ENCODE measurements at regions of chr21 and their contacts with region 1.

Region 1: GRCh38 chr21:41816220-41817165 is 49.6 kb upstream of the RIPK4 start:
- DNase-seq: no peak
- H3K4me3 ChIP-seq: no peak overlapping the region
- H3K27ac ChIP-seq: no peak overlapping the region
- H3K27me3 ChIP-seq: no peaks in the 10 kb centered on the region
- CTCF ChIP-seq: peak; percentile 90

Region 2: DNA sequence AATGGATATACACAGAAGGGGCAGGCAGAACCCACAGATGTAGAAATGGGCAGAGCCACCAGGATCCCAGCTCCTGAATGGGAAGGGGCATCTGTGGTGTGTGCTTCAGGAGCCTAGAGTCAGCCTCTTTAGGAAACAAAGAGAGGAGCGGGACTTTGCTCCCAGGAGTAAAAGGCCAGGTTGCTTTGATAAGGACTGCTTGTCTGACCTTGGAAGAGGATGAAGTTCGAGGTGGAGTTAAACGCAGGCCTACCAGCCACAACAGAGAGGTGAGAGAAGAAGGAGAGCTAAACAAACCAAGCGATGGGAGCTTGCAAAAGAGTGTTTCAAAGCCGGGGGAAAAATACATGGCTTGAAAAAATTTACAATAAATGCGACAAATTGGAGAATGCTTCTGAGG is 258.6 kb before region 1 on chr21:
- CTCF ChIA-PET with region 1: no interaction called
- POLR2A ChIA-PET with region 1: no interaction called
- DNase-seq: no peak
- H3K4me3 ChIP-seq: no peak overlapping the region
- H3K27ac ChIP-seq: no peak overlapping the region
- H3K27me3 ChIP-seq: peaks cover 3% of the 10 kb centered on the region
- CTCF ChIP-seq: no peak

Region 3: GRCh38 chr21:41612674-41613532 is 203.6 kb before region 1 on chr21:
- CTCF ChIA-PET with region 1: interaction called, 79 read pairs
- POLR2A ChIA-PET with region 1: no interaction called
- DNase-seq: peak; percentile 74
- H3K4me3 ChIP-seq: no peak overlapping the region
- H3K27ac ChIP-seq: peak overlapping the region; percentile 68
- H3K27me3 ChIP-seq: peaks cover 12% of the 10 kb centered on the region
- CTCF ChIP-seq: peak; percentile 77

Region 4: GRCh38 chr21:41802684-41803083 is 13.8 kb before region 1 on chr21:
- CTCF ChIA-PET with region 1: interaction called, 17 read pairs
- POLR2A ChIA-PET with region 1: no interaction called
- DNase-seq: no peak
- H3K4me3 ChIP-seq: no peak overlapping the region
- H3K27ac ChIP-seq: no peak overlapping the region
- H3K27me3 ChIP-seq: no peaks in the 10 kb centered on the region
- CTCF ChIP-seq: no peak

Region 5: DNA sequence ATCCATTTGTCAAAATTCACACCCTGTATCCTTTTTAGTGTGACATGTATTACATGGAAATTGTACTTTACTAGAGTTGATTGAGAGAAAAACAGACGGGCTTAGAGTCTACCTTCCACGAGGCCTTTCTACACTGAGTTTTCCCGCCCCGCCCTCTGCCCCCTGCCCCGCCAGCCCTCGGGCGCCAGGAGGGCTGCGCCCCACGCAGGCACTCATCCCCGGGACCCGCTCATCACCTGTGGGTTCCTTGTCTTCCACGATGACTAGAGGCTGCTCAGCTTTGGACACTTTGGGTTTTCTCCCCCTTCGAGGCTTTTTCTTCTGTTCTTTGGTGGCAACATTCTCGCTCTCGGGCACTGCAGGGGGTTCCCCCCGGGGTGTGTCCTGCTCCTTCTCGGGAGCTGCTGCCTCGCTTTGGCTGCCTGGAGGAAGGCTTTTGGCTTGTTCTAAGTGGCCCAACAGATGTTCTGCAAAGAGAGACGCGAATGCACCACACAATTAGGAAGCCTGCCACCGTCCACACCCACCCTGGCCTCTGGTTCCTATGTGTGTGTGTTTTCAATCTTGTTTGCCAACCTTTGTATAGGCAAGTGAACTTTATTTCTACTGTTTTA is 23.0 kb after region 1 on chr21:
- CTCF ChIA-PET with region 1: interaction called, 17 read pairs
- POLR2A ChIA-PET with region 1: no interaction called
- DNase-seq: no peak
- H3K4me3 ChIP-seq: no peak overlapping the region
- H3K27ac ChIP-seq: no peak overlapping the region
- H3K27me3 ChIP-seq: no peaks in the 10 kb centered on the region
- CTCF ChIP-seq: no peak

Region 6: GRCh38 chr21:41877901-41878830 is 61.7 kb after region 1 on chr21:
- CTCF ChIA-PET with region 1: interaction called, 10 read pairs
- POLR2A ChIA-PET with region 1: no interaction called
- DNase-seq: no peak
- H3K4me3 ChIP-seq: peak overlapping the region; percentile 83
- H3K27ac ChIP-seq: peak overlapping the region; percentile 57
- H3K27me3 ChIP-seq: no peaks in the 10 kb centered on the region
- CTCF ChIP-seq: no peak

Region 7: GRCh38 chr21:42117229-42117966 is 300.9 kb after region 1 on chr21:
- CTCF ChIA-PET with region 1: interaction called, 67 read pairs
- POLR2A ChIA-PET with region 1: no interaction called
- DNase-seq: peak; percentile 47
- H3K4me3 ChIP-seq: peak overlapping the region; percentile 31
- H3K27ac ChIP-seq: no peak overlapping the region
- H3K27me3 ChIP-seq: peaks cover 38% of the 10 kb centered on the region
- CTCF ChIP-seq: peak; percentile 92

Region 8: GRCh38 chr21:42258153-42258884 is 441.8 kb after region 1 on chr21:
- CTCF ChIA-PET with region 1: interaction called, 11 read pairs
- POLR2A ChIA-PET with region 1: no interaction called
- DNase-seq: no peak
- H3K4me3 ChIP-seq: no peak overlapping the region
- H3K27ac ChIP-seq: no peak overlapping the region
- H3K27me3 ChIP-seq: peaks cover 25% of the 10 kb centered on the region
- CTCF ChIP-seq: peak; percentile 77

Region 9: GRCh38 chr21:42319376-42319775 is 502.9 kb after region 1 on chr21:
- CTCF ChIA-PET with region 1: no interaction called
- POLR2A ChIA-PET with region 1: no interaction called
- DNase-seq: no peak
- H3K4me3 ChIP-seq: no peak overlapping the region
- H3K27ac ChIP-seq: no peak overlapping the region
- H3K27me3 ChIP-seq: no peaks in the 10 kb centered on the region
- CTCF ChIP-seq: no peak